ENCODE measurements at regions of chr12 and their contacts with region 1.

Region 1: DNA sequence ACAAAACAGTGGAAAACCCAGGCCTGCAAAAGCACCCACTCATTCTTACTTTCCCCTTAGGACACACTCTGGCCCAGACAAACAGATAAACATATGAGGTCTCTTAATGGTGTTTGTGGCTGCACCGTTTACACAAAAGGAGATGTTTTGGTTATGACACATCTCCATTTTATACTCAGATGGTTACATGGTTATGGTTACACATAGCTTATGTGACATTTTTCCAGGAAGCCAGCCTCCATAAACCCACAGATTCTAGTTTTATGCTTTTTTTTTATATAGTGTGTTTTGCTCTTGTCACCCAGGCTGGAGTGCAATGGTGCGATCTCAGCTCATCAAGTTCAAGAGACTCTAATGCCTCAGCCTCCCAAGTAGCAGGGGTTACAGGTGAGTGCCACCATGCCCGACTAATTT is 3.5 kb upstream of the KLRD1 start:
- DNase-seq: peak; percentile 34
- H3K4me3 Mint-ChIP-seq: no peak overlapping the region
- H3K27ac Mint-ChIP-seq: peak overlapping the region; percentile 54
- H3K4me1 Mint-ChIP-seq: peaks cover 51% of the 10 kb centered on the region
- H3K27me3 Mint-ChIP-seq: peaks cover 7% of the 10 kb centered on the region

Region 2: DNA sequence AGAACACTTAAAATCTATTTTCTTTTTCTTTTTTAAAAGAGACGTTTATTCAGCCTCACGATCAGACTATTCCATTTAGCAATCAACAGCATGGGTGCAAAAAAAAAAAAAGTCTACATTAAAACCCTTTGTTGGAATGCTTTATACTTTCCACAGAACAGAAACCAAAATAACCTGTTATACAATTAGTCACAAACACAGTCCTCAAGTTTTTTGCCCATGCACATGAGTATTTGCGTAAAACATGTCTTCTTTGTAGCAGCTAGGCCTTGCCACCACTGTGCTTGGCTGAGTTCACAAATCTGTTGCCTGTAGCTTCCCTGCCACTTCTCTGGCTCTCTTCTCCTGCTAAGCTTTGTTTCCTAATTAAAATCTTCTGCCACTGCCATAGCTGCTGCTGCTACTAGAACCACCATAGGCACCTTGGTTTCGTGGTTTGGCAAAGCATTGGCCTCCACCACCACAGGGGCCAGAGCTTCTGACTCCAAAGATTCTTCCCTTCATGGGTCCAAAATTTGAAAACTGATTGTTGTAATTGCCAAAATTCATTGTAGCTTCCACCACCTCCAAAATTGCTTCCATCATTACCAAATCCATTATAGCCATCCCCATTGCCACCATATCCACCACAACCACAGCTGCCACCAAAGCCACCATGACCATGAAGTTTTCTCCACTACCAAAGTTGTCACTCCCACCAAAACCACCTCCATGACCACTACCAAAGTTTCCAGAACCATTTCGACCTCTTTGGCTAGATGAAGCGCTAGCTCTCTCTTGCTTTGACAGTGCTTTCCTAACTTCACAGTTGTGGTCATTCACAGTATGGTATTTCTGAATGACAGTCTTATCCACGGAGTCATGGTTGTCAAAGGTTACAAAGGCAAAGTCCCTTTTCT is 1276.8 kb before region 1 on chr12:
- intact Hi-C with region 1: loop called (anchors 5 kb)
- DNase-seq: no peak
- H3K4me3 Mint-ChIP-seq: peak overlapping the region; percentile 9
- H3K27ac Mint-ChIP-seq: peak overlapping the region; percentile 88
- H3K4me1 Mint-ChIP-seq: peaks cover 9% of the 10 kb centered on the region
- H3K27me3 Mint-ChIP-seq: no peaks in the 10 kb centered on the region

Region 3: DNA sequence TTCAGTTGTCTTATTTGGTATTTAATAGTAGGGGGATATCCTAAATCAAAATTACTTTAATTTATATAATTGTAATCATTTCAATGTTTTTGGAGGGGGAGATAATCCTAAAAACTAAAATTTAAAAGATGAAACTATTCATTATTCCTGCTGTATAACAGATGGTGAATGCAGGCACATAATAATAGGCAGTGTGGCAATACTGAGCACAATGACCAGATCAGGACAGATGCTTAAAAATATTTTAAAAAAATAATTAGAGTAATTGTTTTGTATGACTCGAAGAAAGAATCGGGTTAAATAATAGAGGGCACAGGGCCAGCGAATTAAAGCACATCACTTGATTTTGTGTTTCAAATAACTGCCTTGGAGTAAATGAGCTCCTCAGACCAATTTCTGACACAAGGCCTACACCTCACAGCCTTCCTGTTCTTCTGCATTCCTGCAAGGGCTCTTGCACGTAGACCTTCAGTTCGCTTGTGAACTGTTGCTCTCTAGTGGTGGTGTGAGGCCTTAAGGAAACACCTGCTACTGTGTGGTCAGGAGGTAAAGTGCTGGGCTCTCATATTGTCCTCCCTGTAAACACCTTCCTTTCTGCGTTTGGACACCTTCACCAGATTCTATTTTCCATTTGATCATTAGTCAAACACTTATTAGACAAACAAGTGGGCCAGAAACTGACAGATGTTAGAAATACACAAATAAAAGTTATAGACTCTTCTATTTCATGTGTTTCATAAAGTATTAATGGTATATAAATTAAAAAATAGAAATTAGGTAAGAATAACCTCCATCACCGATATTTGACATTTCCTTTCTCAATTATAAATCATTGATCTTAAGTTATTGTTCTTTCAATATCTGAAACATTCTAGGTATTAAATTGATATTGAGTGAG is 506.2 kb before region 1 on chr12:
- intact Hi-C with region 1: loop called (anchors 5 kb)
- DNase-seq: peak; percentile 73
- H3K4me3 Mint-ChIP-seq: peak overlapping the region; percentile 46
- H3K27ac Mint-ChIP-seq: peak overlapping the region; percentile 41
- H3K4me1 Mint-ChIP-seq: peaks cover 49% of the 10 kb centered on the region
- H3K27me3 Mint-ChIP-seq: peaks cover 5% of the 10 kb centered on the region

Region 4: DNA sequence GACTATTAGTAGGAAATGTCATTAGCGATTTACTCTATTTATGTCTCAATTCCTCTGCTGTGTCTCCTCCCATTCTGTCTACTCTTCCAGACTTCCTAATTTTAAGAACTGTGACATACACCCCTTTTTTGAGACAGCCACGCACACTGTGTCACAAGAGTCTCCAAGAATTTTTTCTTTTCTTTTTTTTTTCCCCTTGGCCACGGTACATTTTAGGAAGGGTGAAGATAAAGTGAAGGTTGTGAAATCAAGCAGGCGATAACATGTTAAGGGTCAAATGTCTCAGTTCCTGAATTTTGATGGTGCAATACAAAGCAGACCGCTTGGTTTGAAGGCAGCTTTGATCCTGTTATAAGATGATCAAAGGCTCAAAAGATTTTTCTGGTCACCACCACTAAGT is 136.6 kb before region 1 on chr12:
- intact Hi-C with region 1: no loop called
- DNase-seq: no peak
- H3K4me3 Mint-ChIP-seq: no peak overlapping the region
- H3K27ac Mint-ChIP-seq: no peak overlapping the region
- H3K4me1 Mint-ChIP-seq: no peaks in the 10 kb centered on the region
- H3K27me3 Mint-ChIP-seq: peaks cover 31% of the 10 kb centered on the region

Region 5: DNA sequence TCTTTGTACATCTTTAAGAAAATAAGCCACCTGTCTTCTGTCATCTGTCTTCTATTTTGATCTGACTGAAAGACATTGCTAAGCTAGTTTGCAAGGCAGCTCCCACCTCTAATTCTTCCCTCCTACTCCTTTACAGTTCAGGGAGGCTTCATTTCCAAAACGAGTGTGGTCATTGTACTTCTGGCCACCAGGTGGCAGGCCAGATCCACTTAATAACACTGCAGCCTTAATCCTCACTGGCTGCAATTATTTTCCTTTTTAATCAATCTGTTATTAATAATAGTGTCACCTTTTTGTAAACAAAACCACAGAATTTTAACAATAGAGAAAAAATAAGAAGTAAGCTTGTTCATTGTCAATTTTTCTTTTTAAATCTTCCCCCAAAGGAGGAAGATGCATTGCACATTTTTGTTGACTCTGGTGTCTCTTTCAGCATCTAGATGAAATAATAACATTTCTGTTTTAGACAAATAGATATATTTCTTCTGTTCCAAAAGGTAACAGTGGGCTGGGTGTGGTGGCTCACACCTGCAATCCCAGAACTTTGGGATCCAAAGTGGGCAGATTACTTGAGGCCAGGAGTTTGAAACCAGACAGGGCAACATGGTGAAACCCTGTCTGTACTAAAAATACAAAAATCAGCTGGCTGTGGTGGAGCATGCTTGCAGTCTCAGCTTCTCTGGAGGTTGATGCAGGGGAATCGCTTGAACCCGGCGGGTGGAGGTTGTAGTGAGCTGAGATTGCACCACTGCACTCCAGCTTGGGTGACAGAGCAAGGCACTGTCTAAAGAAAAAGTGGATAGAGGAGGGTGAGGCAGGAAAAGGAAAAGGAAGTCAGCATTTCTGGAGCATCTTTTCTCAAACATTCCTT is 68.2 kb before region 1 on chr12:
- intact Hi-C with region 1: loop called (anchors 2 kb)
- DNase-seq: no peak
- H3K4me3 Mint-ChIP-seq: no peak overlapping the region
- H3K27ac Mint-ChIP-seq: no peak overlapping the region
- H3K4me1 Mint-ChIP-seq: peaks cover 15% of the 10 kb centered on the region
- H3K27me3 Mint-ChIP-seq: peaks cover 13% of the 10 kb centered on the region

Region 6: GRCh38 chr12:10364815-10365622 is 60.9 kb after region 1 on chr12:
- intact Hi-C with region 1: loop called (anchors 2 kb)
- DNase-seq: peak; percentile 52
- H3K4me3 Mint-ChIP-seq: no peak overlapping the region
- H3K27ac Mint-ChIP-seq: no peak overlapping the region
- H3K4me1 Mint-ChIP-seq: no peaks in the 10 kb centered on the region
- H3K27me3 Mint-ChIP-seq: peaks cover 39% of the 10 kb centered on the region

Region 7: GRCh38 chr12:10385166-10385613 is 81.0 kb after region 1 on chr12:
- intact Hi-C with region 1: no loop called
- DNase-seq: no peak
- H3K4me3 Mint-ChIP-seq: no peak overlapping the region
- H3K27ac Mint-ChIP-seq: no peak overlapping the region
- H3K4me1 Mint-ChIP-seq: no peaks in the 10 kb centered on the region
- H3K27me3 Mint-ChIP-seq: peaks cover 41% of the 10 kb centered on the region

Region 8: DNA sequence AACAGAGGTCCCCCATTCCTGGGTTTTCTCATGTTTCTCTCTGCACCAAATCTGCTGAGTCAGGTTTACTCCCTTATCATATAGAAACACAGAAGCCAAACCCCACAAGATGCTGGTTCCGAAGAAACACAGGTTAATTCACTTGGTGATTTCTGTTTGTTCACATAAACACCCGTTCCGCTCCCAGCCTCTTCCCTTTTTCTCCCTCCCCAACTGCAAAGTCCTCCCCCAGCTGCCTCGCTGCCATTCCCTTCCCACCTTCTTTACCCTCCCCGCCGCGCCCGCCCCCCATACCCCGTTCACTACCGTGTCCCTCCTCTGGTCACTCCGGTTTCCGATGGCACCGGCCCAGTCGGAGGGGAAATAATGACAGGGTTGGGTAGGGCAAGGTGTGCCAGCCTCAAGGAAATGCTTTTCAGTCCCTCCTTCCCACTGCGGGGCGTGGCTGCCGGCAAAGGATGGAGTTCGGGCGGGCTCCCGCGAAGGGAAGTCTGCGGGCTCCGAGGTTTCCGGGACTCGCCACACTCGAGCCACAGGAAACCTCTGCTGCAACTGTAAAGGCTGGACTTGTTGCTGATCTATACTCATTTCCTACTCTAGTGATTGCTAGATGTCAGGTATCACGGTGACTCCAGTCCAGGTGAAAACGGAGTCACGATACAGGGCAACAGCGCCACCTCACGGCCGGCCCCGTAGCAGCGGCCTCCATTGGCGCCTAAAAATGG is 369.7 kb after region 1 on chr12 and contains the start of gene STYK1:
- intact Hi-C with region 1: loop called (anchors 1 kb)
- DNase-seq: peak; percentile 73
- H3K4me3 Mint-ChIP-seq: peak within 1 kb of the TSS; percentile 86
- H3K27ac Mint-ChIP-seq: peak within 1 kb of the TSS; percentile 72
- H3K4me1 Mint-ChIP-seq: peaks cover 74% of the 10 kb centered on the region
- H3K27me3 Mint-ChIP-seq: peaks cover 35% of the 10 kb centered on the region
- total RNA-seq, gene STYK1: 0.34 TPM in 1 of 2 replicates, not detected in the other

Measured in activated T-helper 1 cell treated with anti-CD3 and anti-CD28 coated beads, Interleukin-12 subunit alpha, Interleukin-12 subunit beta, Interleukin-2, Interleukin-4 antibody, amounts not matched to agents 30 ng/mL and 10 ng/mL and 1 ng/mL, durations not matched to agents 14 hours and 24 hours and 36 hours (primary cell).